Activated B cell treated with CpG ODN at 0.5 μM for 24 hours (primary cell): ENCODE measurements at regions of chr14 and their contacts with region 1.

Region 1: GRCh38 chr14:103385152-103385993 is at the start of gene MARK3:
- DNase-seq: peak; percentile 93
- ATAC-seq: peak; percentile 90
- H3K4me3 Mint-ChIP-seq: peak within 1 kb of the TSS; percentile 97
- H3K27ac Mint-ChIP-seq: peak within 1 kb of the TSS; percentile 93
- H3K4me1 Mint-ChIP-seq: peaks cover 45% of the 10 kb centered on the region
- H3K27me3 Mint-ChIP-seq: peaks cover 2% of the 10 kb centered on the region
- CTCF ChIP-seq: no peak
- total RNA-seq, gene MARK3: 97.1 and 110 TPM in 2 replicates

Region 2: DNA sequence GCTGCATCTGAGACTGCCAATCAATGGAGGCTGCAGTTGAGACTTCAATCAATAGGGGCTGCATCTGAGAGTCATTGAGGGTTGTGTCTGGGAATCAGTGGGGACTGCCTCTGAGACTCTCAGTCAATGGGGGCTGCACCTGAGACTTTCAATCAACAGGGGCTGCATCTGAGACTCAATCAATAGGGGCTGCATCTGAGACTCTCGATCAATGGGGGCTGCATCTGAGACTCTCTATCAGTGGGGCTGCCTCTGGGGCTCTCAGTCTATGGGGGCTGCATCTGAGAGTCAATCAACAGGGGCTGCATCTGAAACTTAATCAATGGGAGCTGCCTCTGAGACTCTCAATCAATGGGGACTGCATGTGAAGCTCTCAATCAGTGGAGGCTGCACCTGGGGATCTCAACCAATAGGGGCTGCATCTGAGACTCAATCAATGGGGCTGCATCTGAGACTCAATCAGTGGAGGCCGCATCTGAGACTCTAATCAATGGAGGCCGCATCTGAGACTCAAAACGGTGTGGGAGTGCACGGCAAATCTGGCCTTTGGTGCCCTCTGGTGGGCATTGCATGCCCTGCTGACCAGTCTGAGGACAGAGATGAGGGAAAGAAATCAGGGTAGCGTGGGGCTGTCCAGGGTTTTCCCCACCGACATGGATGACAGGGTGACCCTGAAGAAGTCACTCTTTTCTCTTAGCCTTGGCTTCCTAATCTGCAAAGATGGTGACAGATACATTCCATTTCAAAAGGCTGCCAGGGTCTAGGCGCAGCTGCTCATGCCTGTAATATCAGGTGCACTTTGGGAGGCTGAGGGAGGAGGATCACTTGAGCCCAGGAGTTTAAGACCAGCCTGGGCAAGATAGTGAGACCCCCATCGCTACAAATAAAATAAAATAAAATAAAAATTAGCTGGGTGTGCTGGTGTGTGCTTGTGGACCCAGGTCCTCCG is 92.7 kb before region 1 on chr14:
- CTCF ChIA-PET with region 1: no interaction called
- POLR2A ChIA-PET with region 1: no interaction called
- intact Hi-C with region 1: loop called (anchors 2 kb)
- DNase-seq: peak; percentile 73
- ATAC-seq: peak; percentile 99
- H3K4me3 Mint-ChIP-seq: no peak overlapping the region
- H3K27ac Mint-ChIP-seq: no peak overlapping the region
- H3K4me1 Mint-ChIP-seq: peaks cover 6% of the 10 kb centered on the region
- H3K27me3 Mint-ChIP-seq: peaks cover 18% of the 10 kb centered on the region
- CTCF ChIP-seq: peak; percentile 24

Region 3: GRCh38 chr14:103528587-103529382 is 143.4 kb after region 1 on chr14 and contains the start of gene TRMT61A:
- CTCF ChIA-PET with region 1: no interaction called
- POLR2A ChIA-PET with region 1: no interaction called
- intact Hi-C with region 1: loop called (anchors 2 kb)
- DNase-seq: peak; percentile 65
- ATAC-seq: peak; percentile 26
- H3K4me3 Mint-ChIP-seq: peak within 1 kb of the TSS; percentile 92
- H3K27ac Mint-ChIP-seq: peak within 1 kb of the TSS; percentile 96
- H3K4me1 Mint-ChIP-seq: peaks cover 62% of the 10 kb centered on the region
- H3K27me3 Mint-ChIP-seq: no peaks in the 10 kb centered on the region
- CTCF ChIP-seq: no peak
- total RNA-seq, gene TRMT61A: 19.4 and 21.8 TPM in 2 replicates

Region 4: GRCh38 chr14:103562429-103563225 is 177.3 kb after region 1 on chr14 and contains the starts of genes BAG5 and COA8:
- CTCF ChIA-PET with region 1: no interaction called
- POLR2A ChIA-PET with region 1: no interaction called
- intact Hi-C with region 1: loop called (anchors 2 kb)
- DNase-seq: peak; percentile 89
- ATAC-seq: peak; percentile 79
- H3K4me3 Mint-ChIP-seq: peak within 1 kb of the TSS; percentile 89
- H3K27ac Mint-ChIP-seq: peak within 1 kb of the TSS; percentile 79
- H3K4me1 Mint-ChIP-seq: peaks cover 52% of the 10 kb centered on the region
- H3K27me3 Mint-ChIP-seq: no peaks in the 10 kb centered on the region
- CTCF ChIP-seq: no peak
- total RNA-seq, gene BAG5: 26.9 and 28.8 TPM in 2 replicates
- total RNA-seq, gene COA8: 28.4 and 28.8 TPM in 2 replicates